ENCODE measurements at regions of chr7 and their contacts with region 1.

Region 1: DNA sequence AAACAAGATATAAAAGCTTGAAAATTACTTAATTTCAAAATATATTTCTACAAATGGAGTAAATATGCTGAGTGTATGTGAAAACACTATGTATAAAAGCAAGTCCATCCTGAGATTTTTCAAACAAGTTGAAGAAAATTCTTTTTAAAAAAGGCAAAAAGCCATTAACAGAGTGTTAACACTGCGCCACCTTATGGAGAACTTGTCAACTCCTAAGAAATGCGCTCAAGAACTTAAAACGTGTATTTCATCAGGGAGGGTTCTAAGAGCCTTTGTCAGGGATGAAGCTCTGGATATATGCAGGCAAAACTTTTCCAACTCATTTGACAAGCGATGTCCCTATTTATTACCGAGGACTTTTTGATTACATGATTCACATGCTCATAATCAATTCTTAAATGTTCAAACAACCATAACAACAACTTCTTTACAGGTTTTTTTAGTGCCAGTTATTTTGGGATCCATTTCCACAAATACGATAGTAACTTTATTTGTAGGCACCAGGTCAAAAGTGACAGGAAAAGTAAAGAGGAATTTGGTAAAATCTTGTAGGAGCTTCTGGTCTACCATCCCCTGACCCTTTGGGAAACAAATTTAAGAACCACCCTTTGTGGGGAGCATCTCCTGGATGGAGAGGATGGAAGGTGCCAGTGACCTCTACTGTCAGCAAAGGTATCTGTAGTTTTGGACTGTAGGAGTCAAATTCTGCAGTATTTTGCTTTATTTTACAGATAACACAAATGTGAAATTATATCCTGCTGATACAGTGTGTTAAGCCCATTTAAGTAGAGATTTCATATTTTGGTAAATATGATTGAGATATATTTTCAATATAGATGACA is 23.2 kb downstream of the CALCR start:
- DNase-seq: peak; percentile 20 to 63
- ATAC-seq: peak in 1 of 2 experiments; percentile 82; a peak in 3 of 6 replicates
- H3K4me3 ChIP-seq: no peak overlapping the region
- H3K27ac ChIP-seq: no peak overlapping the region
- H3K4me1 ChIP-seq: no peaks in the 10 kb centered on the region
- CTCF ChIP-seq: peak; percentile 62
- EP300 ChIP-seq: no peak
- POLR2A ChIP-seq: no peak
- RAD21 ChIP-seq: peak; percentile 54 to 55

Region 2: DNA sequence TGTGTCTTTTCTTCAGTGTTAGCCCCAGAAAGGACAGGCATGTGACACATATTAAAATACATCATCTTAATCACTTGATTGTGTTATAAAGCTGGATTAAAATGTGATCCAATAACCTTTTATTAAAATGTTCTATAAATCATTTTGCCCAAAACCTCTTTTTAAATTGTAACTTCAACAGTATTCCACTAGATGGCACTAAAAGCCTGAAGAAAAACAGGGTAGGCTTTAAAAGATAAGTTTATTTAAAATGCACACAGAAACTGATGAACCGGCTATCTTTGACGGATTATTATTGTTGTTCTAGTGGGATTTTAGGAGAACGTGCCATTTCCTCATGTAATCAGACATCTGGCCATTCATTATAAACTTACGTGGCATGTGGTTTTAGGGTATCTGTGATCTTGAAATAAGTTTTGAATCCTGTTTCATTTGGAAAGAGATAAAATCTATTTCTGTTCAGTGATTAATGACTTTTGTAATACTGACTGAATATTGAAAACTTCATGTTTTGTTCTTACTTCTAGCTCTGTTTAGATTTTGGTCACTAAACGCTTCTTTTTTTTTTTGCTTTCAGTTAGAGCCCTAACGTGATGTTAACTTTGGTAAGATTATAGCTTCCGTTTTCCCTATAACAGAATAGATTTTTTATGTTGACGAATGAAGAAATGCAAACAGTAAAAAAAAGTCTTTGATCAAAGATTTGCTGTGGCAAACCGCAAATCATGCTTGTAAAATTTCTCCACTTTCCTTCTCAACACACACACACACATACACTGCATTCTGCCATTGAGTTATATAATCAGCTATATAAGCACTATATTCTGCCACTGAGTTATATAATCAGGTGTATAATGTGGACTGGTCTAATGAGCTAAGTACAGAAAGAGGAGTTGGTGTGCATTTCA is 305.5 kb before region 1 on chr7:
- CTCF ChIA-PET with region 1: interaction called, 20 read pairs
- POLR2A ChIA-PET with region 1: no interaction called
- DNase-seq: peak in 1 of 2 experiments; percentile 20
- ATAC-seq: no peak
- H3K4me3 ChIP-seq: no peak overlapping the region
- H3K27ac ChIP-seq: no peak overlapping the region
- H3K4me1 ChIP-seq: no peaks in the 10 kb centered on the region
- CTCF ChIP-seq: peak; percentile 81
- EP300 ChIP-seq: no peak
- POLR2A ChIP-seq: no peak
- RAD21 ChIP-seq: peak; percentile 66 to 83

Region 3: GRCh38 chr7:93566876-93567275 is 15.6 kb after region 1 on chr7:
- CTCF ChIA-PET with region 1: interaction called, 11 read pairs
- POLR2A ChIA-PET with region 1: no interaction called
- DNase-seq: no peak
- ATAC-seq: no peak
- H3K4me3 ChIP-seq: no peak overlapping the region
- H3K27ac ChIP-seq: no peak overlapping the region
- H3K4me1 ChIP-seq: no peaks in the 10 kb centered on the region
- CTCF ChIP-seq: no peak
- EP300 ChIP-seq: no peak
- POLR2A ChIP-seq: no peak
- RAD21 ChIP-seq: no peak

Region 4: GRCh38 chr7:94115316-94115715 is 564.0 kb after region 1 on chr7:
- CTCF ChIA-PET with region 1: no interaction called
- POLR2A ChIA-PET with region 1: no interaction called
- DNase-seq: no peak
- ATAC-seq: no peak
- H3K4me3 ChIP-seq: no peak overlapping the region
- H3K27ac ChIP-seq: no peak overlapping the region
- H3K4me1 ChIP-seq: no peaks in the 10 kb centered on the region
- CTCF ChIP-seq: no peak
- EP300 ChIP-seq: no peak
- POLR2A ChIP-seq: no peak
- RAD21 ChIP-seq: no peak

Measured in A549 (cell line).